Dendritic cell treated with granulocyte-macrophage colony-stimulating factor and Interleukin-4, amounts not matched to agents 40 ng/mL and 50 ng/mL, for 4 days (primary cell): ENCODE measurements at regions of chr12 and their contacts with region 1.

Region 1: GRCh38 chr12:121214855-121215745 is 5.2 kb downstream of the P2RX4 start:
- H3K4me3 Mint-ChIP-seq: peak overlapping the region; percentile 40
- H3K27ac Mint-ChIP-seq: peak overlapping the region; percentile 89
- H3K4me1 Mint-ChIP-seq: peaks cover 66% of the 10 kb centered on the region
- H3K27me3 Mint-ChIP-seq: no peaks in the 10 kb centered on the region

Region 2: DNA sequence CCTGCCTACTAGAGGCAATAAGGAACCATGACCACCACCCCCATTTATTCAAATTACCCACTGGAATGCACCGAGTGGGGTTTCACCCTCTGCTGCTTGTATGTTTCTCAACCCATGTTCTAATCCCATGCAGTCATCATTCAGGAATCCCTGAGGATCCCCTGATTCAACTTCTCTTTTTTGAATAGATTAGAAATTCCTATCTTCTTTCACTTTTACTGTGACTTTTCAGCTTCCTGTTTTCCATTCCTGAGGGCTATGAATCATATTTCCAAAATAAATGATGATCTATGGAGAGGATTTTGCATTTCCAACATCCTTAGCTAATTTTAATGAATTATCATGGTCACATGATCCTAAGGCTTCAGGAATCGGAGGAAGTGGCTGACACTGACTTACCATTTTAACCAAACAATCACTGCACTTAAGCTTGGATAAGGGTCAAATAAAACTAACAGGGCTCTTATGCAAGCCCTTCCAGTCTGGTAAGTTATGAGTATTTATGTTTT is 24.5 kb before region 1 on chr12:
- intact Hi-C with region 1: loop called (anchors 2 kb)
- H3K4me3 Mint-ChIP-seq: no peak overlapping the region
- H3K27ac Mint-ChIP-seq: peak overlapping the region; percentile 47
- H3K4me1 Mint-ChIP-seq: peaks cover 55% of the 10 kb centered on the region
- H3K27me3 Mint-ChIP-seq: no peaks in the 10 kb centered on the region